ENCODE measurements at regions of chr2 and their contacts with region 1.

Region 1: DNA sequence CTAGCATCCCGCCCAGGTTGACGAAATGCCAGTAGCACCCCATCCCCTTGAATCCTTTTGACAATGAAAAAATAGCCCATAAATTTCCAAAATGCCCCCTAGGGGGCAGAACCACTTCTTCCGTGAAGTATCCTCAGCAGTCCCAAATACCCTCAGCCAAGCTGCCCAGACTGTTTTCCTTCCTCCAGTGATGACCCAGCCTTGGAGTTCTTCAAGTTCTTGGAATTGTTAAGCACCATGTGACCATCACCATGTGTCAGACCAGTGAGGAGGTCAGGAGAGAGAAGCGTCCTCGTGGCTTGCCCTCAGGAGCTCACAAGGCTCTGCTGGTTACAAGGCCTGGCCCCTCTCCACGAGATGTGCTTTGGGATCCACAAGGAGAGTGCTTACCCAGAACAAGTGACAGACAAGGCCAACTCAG is 1.4 kb upstream of the SLC23A3 start:
- DNase-seq: peak; percentile 36
- H3K4me3 Mint-ChIP-seq: no peak overlapping the region
- H3K27ac Mint-ChIP-seq: peak overlapping the region; percentile 77
- H3K4me1 Mint-ChIP-seq: peaks cover 30% of the 10 kb centered on the region
- H3K27me3 Mint-ChIP-seq: no peaks in the 10 kb centered on the region

Region 2: GRCh38 chr2:219206442-219207253 is 35.4 kb after region 1 on chr2 and contains the start of gene ZFAND2B:
- CTCF ChIA-PET with region 1: interaction called, 70 read pairs
- DNase-seq: peak; percentile 95
- H3K4me3 Mint-ChIP-seq: peak within 1 kb of the TSS; percentile 87
- H3K27ac Mint-ChIP-seq: peak within 1 kb of the TSS; percentile 98
- H3K4me1 Mint-ChIP-seq: peaks cover 58% of the 10 kb centered on the region
- H3K27me3 Mint-ChIP-seq: no peaks in the 10 kb centered on the region